AG04449 (cell line): ENCODE measurements at regions of chr5 and their contacts with region 1.

Region 1: GRCh38 chr5:39424736-39425637 is at the start of gene DAB2:
- DNase-seq: peak; percentile 91
- H3K4me3 ChIP-seq: peak within 1 kb of the TSS; percentile 83
- CTCF ChIP-seq: peak; percentile 87

Region 2: GRCh38 chr5:39376293-39376714 is 48.7 kb before region 1 on chr5:
- CTCF ChIA-PET with region 1: interaction called, 20 read pairs
- POLR2A ChIA-PET with region 1: interaction called, 6 read pairs
- DNase-seq: no peak
- H3K4me3 ChIP-seq: no peak overlapping the region
- CTCF ChIP-seq: peak; percentile 41

Region 3: GRCh38 chr5:39405083-39405843 is 19.7 kb before region 1 on chr5:
- CTCF ChIA-PET with region 1: interaction called, 15 read pairs
- POLR2A ChIA-PET with region 1: interaction called, 35 read pairs
- DNase-seq: no peak
- H3K4me3 ChIP-seq: no peak overlapping the region
- CTCF ChIP-seq: no peak

Region 4: DNA sequence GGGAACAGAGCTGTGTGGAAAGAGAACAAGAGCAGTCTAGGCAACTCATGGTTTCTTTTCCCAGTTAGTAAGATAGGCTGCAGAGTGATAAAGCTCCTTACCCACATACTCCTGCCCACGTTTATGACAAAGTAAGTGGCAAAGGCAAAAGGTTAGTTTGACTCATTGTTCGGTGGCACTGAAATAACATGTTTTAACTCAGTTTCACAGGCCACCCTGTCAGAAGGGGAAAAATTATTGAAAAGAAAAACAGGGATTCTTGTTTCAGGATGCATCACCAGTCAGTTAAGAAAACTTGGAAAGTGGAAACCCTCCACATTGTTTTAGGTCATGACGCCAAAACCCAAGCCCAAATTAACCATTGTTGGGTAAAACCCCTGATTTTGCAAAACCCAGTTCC is 22.1 kb after region 1 on chr5:
- CTCF ChIA-PET with region 1: interaction called, 14 read pairs
- POLR2A ChIA-PET with region 1: interaction called, 36 read pairs
- DNase-seq: no peak
- H3K4me3 ChIP-seq: no peak overlapping the region
- CTCF ChIP-seq: no peak

Region 5: DNA sequence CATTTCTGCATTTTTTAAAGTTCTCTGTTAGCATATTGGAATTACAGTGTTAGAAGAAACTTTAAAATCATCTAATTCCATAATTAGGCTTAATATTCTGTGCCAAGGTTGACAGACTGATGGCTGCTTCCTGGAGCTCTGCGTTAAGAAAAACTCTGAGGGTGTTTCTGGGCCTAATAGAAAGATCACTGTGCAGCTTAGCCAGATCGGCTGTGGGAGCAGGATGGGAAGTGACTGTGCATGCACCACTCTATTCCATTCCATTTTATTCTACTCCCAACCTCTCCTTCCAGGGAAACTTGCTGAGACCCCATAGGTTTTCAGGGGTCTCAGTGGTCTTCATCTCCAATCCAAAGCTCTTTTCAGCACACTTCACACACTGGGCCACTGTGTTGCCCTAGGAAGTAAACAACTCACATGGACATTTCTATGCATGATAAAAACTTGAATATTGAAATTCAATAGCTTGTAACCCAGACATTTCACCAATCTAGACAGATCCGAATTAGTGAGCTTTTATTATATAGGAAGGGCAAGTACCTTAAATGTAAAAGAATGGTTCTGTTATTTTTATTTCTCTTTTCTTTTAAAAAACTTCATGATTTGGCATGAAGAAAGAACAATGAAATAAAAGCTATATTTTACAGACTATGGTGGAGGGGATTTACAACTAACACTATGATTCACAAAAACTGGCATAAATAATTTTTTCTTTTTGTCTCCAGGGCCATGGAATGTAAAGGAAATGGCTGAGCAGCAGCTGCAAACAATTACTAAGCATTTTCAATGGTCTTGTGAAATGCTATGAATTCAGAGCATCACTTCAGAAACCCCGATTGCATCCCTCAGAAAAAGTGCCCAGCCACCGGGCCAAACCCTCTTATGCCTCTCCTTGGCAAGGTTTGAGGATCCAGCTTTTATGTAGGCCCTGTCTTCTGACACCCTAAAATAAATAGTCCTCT is 51.2 kb after region 1 on chr5:
- CTCF ChIA-PET with region 1: interaction called, 11 read pairs
- POLR2A ChIA-PET with region 1: interaction called, 35 read pairs
- DNase-seq: no peak
- H3K4me3 ChIP-seq: no peak overlapping the region
- CTCF ChIP-seq: no peak

Region 6: GRCh38 chr5:39501397-39501796 is 76.4 kb after region 1 on chr5:
- CTCF ChIA-PET with region 1: interaction called, 14 read pairs
- POLR2A ChIA-PET with region 1: interaction called, 36 read pairs
- DNase-seq: peak; percentile 73
- H3K4me3 ChIP-seq: no peak overlapping the region
- CTCF ChIP-seq: no peak

Region 7: DNA sequence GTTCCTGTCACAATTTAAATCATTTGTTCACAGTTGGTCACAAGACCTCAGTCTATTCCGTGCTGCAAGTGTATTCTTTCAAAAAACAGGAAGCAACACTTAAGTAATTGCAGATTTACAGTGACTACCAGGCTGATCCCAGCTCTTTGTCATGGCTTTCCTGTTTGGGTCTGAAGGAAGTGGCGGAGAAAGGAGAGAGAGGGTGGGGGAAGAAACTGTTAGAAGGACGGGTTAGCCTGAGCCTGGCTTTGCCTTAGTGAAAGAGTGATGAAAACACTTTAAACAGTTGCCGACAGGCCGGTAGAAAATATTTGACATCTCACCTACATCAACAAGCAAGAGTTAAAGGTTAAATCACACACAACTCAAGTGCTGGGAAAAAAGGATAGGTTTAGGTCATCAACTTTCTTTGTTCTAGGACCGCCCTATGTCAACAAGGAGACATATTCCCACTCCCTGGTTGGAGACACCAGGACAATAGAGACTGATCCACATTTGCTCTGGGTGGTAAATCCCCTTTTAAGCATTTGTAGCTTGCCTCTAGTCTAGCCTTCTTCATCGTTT is 102.0 kb after region 1 on chr5:
- CTCF ChIA-PET with region 1: interaction called, 20 read pairs
- POLR2A ChIA-PET with region 1: interaction called, 17 read pairs
- DNase-seq: no peak
- H3K4me3 ChIP-seq: no peak overlapping the region
- CTCF ChIP-seq: no peak